Activated CD4-positive, alpha-beta T cell treated with anti-CD3 and anti-CD28 coated beads for 36 hours (primary cell): ENCODE measurements at regions of chr12 and their contacts with region 1.

Region 1: DNA sequence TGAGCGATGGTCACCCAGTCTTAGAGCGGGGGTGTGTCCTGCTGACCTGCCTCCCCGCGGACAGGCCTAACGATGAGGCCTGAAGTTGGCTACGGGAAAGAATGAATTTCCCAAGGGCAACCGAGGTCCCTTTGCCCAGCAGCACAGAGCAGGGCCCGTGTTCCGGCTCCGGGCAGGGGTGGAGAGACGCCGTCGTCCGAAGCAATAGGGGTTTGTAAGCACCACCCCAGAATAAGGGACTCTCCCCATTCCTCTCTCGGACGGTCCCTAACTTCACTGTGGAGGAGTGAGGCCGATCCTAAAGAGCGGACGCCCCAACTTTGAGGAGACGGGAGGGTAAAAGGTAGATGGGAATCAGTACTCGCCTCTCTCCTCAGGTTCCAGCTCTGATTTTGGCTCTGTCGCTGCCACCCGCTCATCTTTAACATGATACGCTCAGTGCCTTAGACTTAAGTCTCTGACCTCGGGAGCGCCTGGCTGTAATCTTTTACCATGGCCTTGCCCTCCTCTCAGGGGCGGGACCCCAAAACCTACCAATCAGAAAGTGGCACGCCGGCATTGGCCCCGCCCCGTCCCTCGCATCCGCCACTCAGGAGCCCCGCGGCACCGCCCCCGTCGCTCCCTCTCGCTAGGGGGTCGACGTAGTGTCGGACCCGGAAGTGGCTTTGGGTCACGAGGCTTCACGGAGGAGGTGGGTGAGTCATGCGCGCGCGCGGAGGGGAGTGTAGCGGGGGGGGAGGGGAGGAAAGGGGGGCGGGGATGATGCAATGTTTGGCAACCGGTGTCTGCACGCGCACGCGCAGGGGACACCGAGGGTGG is at the start of gene DDIT3:
- DNase-seq: peak; percentile 100
- ATAC-seq: peak; percentile 76
- H3K4me3 Mint-ChIP-seq: peak within 1 kb of the TSS; percentile 96
- H3K27ac Mint-ChIP-seq: peak within 1 kb of the TSS; percentile 99
- H3K4me1 Mint-ChIP-seq: peaks cover 53% of the 10 kb centered on the region
- H3K27me3 Mint-ChIP-seq: no peaks in the 10 kb centered on the region
- total RNA-seq, gene DDIT3: 31.2 to 32.2 TPM

Region 2: GRCh38 chr12:55973598-55974307 is 1546.5 kb before region 1 on chr12 and contains the start of gene RAB5B:
- CTCF ChIA-PET with region 1: no interaction called
- POLR2A ChIA-PET with region 1: no interaction called
- intact Hi-C with region 1: loop called in 1 of 2 experiments (anchors 5 kb)
- DNase-seq: peak; percentile 98
- ATAC-seq: peak; percentile 93
- H3K4me3 Mint-ChIP-seq: no peak within 1 kb of the TSS
- H3K27ac Mint-ChIP-seq: no peak within 1 kb of the TSS
- H3K4me1 Mint-ChIP-seq: peaks cover 28% of the 10 kb centered on the region
- H3K27me3 Mint-ChIP-seq: no peaks in the 10 kb centered on the region
- total RNA-seq, gene RAB5B: 33.2 to 35.1 TPM

Region 3: DNA sequence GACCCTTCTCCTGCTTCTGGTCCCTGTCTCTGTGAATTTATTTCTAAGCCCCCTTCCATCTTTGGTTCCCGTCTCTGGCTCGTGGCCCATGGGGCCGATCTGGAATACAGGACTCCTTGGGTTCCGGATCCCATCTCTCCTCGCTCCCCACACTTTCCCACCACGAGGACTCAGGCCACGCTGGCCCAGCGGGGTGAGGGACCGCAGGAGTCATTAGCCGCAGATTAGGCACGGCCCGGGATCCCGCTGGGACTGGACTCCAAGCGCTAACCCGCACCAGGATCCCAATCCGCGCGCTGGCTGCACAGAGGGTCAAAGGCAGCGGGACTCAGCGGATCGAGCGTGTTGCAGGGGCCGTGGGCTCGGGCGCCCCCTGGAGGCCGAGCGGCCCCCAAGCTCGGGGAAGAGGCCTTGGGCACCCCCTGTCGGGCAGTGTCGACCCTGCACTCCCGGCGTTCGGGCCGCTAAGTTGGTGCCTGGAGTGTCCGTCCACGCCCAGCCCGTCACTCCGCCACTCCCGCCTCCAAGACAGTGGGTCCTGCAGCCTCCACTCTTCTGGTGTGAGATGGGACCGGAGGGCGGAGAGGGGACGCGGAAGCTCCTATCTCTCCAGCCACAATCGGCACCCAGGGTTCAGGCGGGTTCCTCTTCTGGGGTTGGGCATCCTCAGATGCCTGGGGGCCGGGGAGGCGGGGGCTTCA is 281.3 kb before region 1 on chr12:
- CTCF ChIA-PET with region 1: no interaction called
- POLR2A ChIA-PET with region 1: interaction called, 3 read pairs
- intact Hi-C with region 1: loop called in 1 of 2 experiments (anchors 1 kb)
- DNase-seq: peak; percentile 94
- ATAC-seq: peak; percentile 57
- H3K4me3 Mint-ChIP-seq: peak overlapping the region; percentile 83
- H3K27ac Mint-ChIP-seq: peak overlapping the region; percentile 80
- H3K4me1 Mint-ChIP-seq: peaks cover 70% of the 10 kb centered on the region
- H3K27me3 Mint-ChIP-seq: peaks cover 44% of the 10 kb centered on the region

Region 4: DNA sequence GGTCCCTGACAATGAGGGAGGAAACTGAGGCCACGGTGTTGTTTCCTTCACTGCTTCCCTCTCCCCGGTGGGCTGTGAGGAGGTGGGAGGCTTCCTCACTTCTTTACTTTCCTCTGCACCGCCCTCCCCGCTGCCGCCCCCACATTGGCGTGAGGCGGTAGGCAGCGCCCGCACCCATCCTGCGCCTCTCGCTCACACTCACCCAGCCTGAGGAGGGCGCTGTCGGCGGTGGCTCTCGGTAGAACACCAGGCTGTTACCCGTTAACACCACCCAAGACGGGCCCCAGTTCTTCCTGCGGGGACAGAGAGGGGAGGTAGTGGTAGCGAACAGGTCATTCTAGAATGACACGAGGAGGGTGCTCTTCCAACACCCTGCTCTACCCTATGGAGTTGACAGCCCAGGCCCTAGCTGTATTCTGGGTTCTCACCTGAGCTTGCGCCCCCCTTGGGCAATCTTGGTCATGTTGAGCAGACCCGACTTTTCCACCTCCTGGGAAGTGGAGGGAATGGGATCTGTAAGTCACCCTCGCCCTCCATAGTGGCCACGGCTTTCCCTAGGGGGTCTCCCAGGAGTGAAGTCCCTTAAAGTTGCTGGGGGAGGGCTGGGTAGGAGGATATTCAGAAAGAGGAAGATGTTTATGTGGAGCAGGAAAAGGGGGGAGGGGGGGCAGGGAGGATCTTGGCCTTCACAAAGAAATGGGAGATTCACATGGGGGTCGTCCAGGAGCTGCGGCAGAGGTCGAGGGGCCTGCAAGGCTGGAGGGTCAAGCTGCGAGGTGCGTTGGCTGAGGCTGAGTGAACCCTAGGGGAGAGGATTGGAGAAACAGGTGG is 43.9 kb before region 1 on chr12:
- CTCF ChIA-PET with region 1: interaction called, 3 read pairs
- POLR2A ChIA-PET with region 1: interaction called, 5 read pairs
- intact Hi-C with region 1: loop called (anchors 1 kb)
- DNase-seq: peak; percentile 96
- ATAC-seq: peak; percentile 71
- H3K4me3 Mint-ChIP-seq: peak overlapping the region; percentile 86
- H3K27ac Mint-ChIP-seq: peak overlapping the region; percentile 99
- H3K4me1 Mint-ChIP-seq: peaks cover 62% of the 10 kb centered on the region
- H3K27me3 Mint-ChIP-seq: no peaks in the 10 kb centered on the region

Region 5: GRCh38 chr12:57590536-57591479 is 70.5 kb after region 1 on chr12 and contains the start of gene PIP4K2C:
- CTCF ChIA-PET with region 1: interaction called, 3 read pairs
- POLR2A ChIA-PET with region 1: no interaction called
- intact Hi-C with region 1: loop called in 1 of 2 experiments (anchors 1 kb)
- DNase-seq: peak; percentile 87
- ATAC-seq: peak; percentile 98
- H3K4me3 Mint-ChIP-seq: peak within 1 kb of the TSS; percentile 82
- H3K27ac Mint-ChIP-seq: peak within 1 kb of the TSS; percentile 70
- H3K4me1 Mint-ChIP-seq: peaks cover 21% of the 10 kb centered on the region
- H3K27me3 Mint-ChIP-seq: no peaks in the 10 kb centered on the region
- total RNA-seq, gene PIP4K2C: 12.1 to 14.9 TPM

Region 6: GRCh38 chr12:57751788-57752667 is 231.8 kb after region 1 on chr12 and contains the start of gene CDK4:
- CTCF ChIA-PET with region 1: no interaction called
- POLR2A ChIA-PET with region 1: no interaction called
- intact Hi-C with region 1: loop called (anchors 1 to 5 kb)
- DNase-seq: peak; percentile 99
- ATAC-seq: peak; percentile 77
- H3K4me3 Mint-ChIP-seq: peak within 1 kb of the TSS; percentile 100
- H3K27ac Mint-ChIP-seq: peak within 1 kb of the TSS; percentile 99
- H3K4me1 Mint-ChIP-seq: peaks cover 56% of the 10 kb centered on the region
- H3K27me3 Mint-ChIP-seq: no peaks in the 10 kb centered on the region
- total RNA-seq, gene CDK4: 132 to 208 TPM